Naive thymus-derived CD4-positive, alpha-beta T cell (primary cell): ENCODE measurements at regions of chr7 and their contacts with region 1.

Region 1: DNA sequence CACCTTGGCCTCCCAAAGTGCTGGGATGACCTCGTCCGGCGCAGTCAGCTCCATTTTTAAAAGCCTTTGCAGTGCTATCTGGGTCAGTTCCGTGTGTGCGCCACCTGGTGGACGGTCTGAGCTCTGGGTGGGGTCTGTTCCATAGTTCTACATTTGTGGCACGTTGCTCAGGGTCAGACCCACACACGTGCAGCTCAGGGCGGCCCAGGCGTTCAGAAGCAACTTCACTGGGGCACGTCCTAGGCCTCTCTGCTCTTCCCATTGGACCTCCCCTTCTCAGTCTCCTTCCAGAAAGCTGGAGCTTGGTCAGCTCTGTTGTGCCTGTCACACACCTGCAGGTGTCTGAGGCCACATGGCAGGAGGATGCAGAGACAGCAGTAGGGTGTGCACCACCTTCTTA is 137.9 kb downstream of the DNAJB6 start:
- DNase-seq: no peak
- ATAC-seq: no peak
- H3K4me3 ChIP-seq: no peak overlapping the region
- H3K4me3 Mint-ChIP-seq: peak overlapping the region in 5 of 10 donors; percentile 17 to 44 (median 36)
- H3K27ac ChIP-seq: no peak overlapping the region
- H3K27ac Mint-ChIP-seq: peak overlapping the region in 8 of 9 donors; percentile 3 to 97 (median 76)
- H3K4me1 ChIP-seq: peaks cover 21 to 44% of the 10 kb centered on the region in 2 donors
- H3K4me1 Mint-ChIP-seq: peaks cover 41 to 85% (median 63%) of the 10 kb centered on the region in 7 donors
- H3K27me3 ChIP-seq: no peaks in the 10 kb centered on the region
- H3K27me3 Mint-ChIP-seq: no peaks in the 10 kb centered on the region

Region 2: GRCh38 chr7:157485361-157485831 is 10.7 kb after region 1 on chr7:
- CTCF ChIA-PET with region 1: interaction called, 3 read pairs
- POLR2A ChIA-PET with region 1: interaction called, 20 read pairs
- intact Hi-C with region 1: loop called (anchors 1 kb)
- DNase-seq: no peak
- ATAC-seq: peak; percentile 30
- H3K4me3 ChIP-seq: no peak overlapping the region
- H3K4me3 Mint-ChIP-seq: peak overlapping the region in 1 of 10 donors; percentile 12
- H3K27ac ChIP-seq: no peak overlapping the region
- H3K27ac Mint-ChIP-seq: peak overlapping the region in 3 of 9 donors; percentile 15 to 59 (median 47)
- H3K4me1 ChIP-seq: peaks cover 13 to 19% of the 10 kb centered on the region in 2 donors
- H3K4me1 Mint-ChIP-seq: peaks cover 11 to 32% (median 18%) of the 10 kb centered on the region in 7 donors
- H3K27me3 ChIP-seq: no peaks in the 10 kb centered on the region
- H3K27me3 Mint-ChIP-seq: peaks cover 0 to 8% (median 0%) of the 10 kb centered on the region in 5 donors

Region 3: GRCh38 chr7:157490457-157490912 is 15.8 kb after region 1 on chr7:
- CTCF ChIA-PET with region 1: interaction called, 5 read pairs
- POLR2A ChIA-PET with region 1: interaction called, 20 read pairs
- intact Hi-C with region 1: loop called (anchors 1 kb)
- DNase-seq: peak in 8 of 9 donors; percentile 48 to 83 (median 79)
- ATAC-seq: peak; percentile 96
- H3K4me3 ChIP-seq: no peak overlapping the region
- H3K4me3 Mint-ChIP-seq: peak overlapping the region; percentile 23 to 76 (median 51)
- H3K27ac ChIP-seq: no peak overlapping the region
- H3K27ac Mint-ChIP-seq: peak overlapping the region; percentile 12 to 90 (median 63)
- H3K4me1 ChIP-seq: peaks cover 18 to 21% of the 10 kb centered on the region in 2 donors
- H3K4me1 Mint-ChIP-seq: peaks cover 20 to 55% (median 41%) of the 10 kb centered on the region in 7 donors
- H3K27me3 ChIP-seq: no peaks in the 10 kb centered on the region
- H3K27me3 Mint-ChIP-seq: peaks cover 0 to 33% (median 10%) of the 10 kb centered on the region in 5 donors

Region 4: DNA sequence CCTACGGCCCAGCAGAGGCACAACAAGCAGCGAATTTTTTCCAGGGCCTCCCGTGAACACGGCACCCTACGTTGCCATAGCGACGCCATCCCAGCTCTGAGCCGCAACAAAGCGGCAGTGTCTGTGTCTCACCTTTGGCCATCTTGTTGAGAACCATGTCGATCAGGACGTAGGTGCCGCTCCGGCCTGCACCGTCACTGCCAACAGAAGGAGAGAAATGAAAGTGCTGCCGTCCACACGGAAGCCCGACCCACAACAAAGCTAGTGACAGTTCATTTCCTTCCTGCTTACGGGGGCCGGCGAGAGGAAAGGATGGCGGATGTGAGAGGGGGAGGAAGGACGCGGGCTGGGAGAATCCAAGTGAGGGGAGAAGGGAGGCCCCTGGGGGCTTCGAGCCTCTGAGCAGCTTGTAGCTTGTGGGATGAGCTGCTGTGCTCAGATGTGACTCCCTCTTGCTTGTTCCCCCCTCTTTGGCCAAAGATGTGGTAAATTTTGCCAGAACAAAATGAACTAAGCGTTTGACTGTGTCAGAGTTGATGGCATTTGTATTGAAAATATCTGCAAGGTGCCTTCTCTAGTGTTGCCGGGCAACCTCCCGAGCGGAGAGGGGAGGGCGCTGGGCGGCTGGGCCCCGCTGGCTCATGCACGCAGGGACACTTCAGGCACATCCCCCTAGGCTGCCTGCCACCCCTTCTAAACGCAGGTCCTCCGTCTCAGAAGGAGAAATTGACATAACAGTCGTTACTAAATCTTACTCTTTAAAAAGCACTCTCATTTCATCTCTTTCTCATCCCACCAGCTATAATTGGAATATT is 94.3 kb after region 1 on chr7:
- CTCF ChIA-PET with region 1: interaction called, 3 read pairs
- POLR2A ChIA-PET with region 1: interaction called, 3 read pairs
- intact Hi-C with region 1: loop called in 1 of 2 experiments (anchors 2 kb)
- DNase-seq: peak; percentile 36 to 73 (median 64)
- ATAC-seq: peak; percentile 84
- H3K4me3 ChIP-seq: peak overlapping the region; percentile 54
- H3K4me3 Mint-ChIP-seq: peak overlapping the region; percentile 87 to 98 (median 92)
- H3K27ac ChIP-seq: no peak overlapping the region
- H3K27ac Mint-ChIP-seq: peak overlapping the region; percentile 63 to 95 (median 82)
- H3K4me1 ChIP-seq: peaks cover 11 to 15% of the 10 kb centered on the region in 2 donors
- H3K4me1 Mint-ChIP-seq: peaks cover 12 to 33% (median 24%) of the 10 kb centered on the region in 7 donors
- H3K27me3 ChIP-seq: no peaks in the 10 kb centered on the region
- H3K27me3 Mint-ChIP-seq: peaks cover 0 to 6% (median 0%) of the 10 kb centered on the region in 5 donors

Region 5: DNA sequence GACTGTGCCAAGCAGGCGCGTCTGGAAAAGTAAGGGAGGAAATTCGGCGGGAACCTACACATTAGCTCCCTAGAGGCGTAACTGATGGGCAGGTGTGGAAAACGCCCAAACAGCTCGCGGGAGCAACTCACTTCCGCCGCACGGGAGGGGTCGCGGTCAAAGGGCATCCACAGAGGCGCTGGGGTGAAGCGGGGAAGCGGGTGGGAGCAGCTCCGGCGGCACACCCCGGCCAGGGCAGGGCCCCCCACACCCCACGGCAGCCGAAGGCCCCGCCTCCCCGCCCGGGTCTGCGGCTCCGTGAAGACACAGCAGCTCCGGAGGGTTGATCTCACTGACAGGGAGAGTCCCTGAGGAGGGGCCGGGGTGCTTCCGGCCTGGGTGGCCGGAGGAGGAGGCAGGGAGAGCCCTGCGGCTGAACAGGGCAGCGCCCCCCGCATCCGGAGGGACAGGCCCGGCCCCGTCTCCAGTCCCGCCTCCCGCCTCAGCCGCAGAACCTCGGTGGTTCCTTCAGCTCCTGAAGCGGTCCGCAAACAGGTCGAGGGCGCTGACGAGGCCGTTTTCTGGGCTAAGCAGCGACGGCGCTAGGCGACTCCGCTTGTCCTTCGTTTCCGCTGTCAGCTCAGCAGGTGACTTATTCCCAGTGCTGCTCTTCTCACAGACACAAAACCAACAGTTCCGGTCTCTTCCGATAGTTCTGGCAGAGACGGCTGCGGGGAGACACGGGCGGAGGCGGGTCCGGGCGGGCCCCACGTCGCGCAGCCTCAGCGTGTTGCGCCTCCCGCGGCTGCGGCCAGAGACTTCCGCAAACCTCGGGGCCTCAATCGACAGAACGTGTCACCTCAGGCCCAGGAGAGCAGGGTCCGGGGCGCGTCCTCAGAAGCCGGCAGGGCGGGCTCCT is 138.2 kb after region 1 on chr7:
- CTCF ChIA-PET with region 1: interaction called, 3 read pairs
- POLR2A ChIA-PET with region 1: interaction called, 6 read pairs
- intact Hi-C with region 1: loop called in 1 of 2 experiments (anchors 5 kb)
- DNase-seq: peak; percentile 50 to 86 (median 79)
- ATAC-seq: peak; percentile 88
- H3K4me3 ChIP-seq: peak overlapping the region; percentile 79
- H3K4me3 Mint-ChIP-seq: peak overlapping the region; percentile 76 to 93 (median 86)
- H3K27ac ChIP-seq: peak overlapping the region; percentile 63
- H3K27ac Mint-ChIP-seq: peak overlapping the region; percentile 80 to 97 (median 88)
- H3K4me1 ChIP-seq: peaks cover 0 to 8% of the 10 kb centered on the region in 2 donors
- H3K4me1 Mint-ChIP-seq: peaks cover 8 to 37% (median 23%) of the 10 kb centered on the region in 7 donors
- H3K27me3 ChIP-seq: no peaks in the 10 kb centered on the region
- H3K27me3 Mint-ChIP-seq: peaks cover 0 to 4% (median 0%) of the 10 kb centered on the region in 5 donors

Region 6: GRCh38 chr7:157827045-157827862 is 352.6 kb after region 1 on chr7:
- CTCF ChIA-PET with region 1: no interaction called
- POLR2A ChIA-PET with region 1: no interaction called
- intact Hi-C with region 1: loop called in 1 of 2 experiments (anchors 5 kb)
- DNase-seq: peak in 7 of 9 donors; percentile 53 to 79 (median 67)
- ATAC-seq: peak; percentile 74
- H3K4me3 ChIP-seq: peak overlapping the region; percentile 37
- H3K4me3 Mint-ChIP-seq: peak overlapping the region; percentile 45 to 83 (median 78)
- H3K27ac ChIP-seq: peak overlapping the region; percentile 40
- H3K27ac Mint-ChIP-seq: peak overlapping the region; percentile 66 to 96 (median 89)
- H3K4me1 ChIP-seq: peaks cover 0 to 47% of the 10 kb centered on the region in 2 donors
- H3K4me1 Mint-ChIP-seq: peaks cover 9 to 58% (median 45%) of the 10 kb centered on the region in 7 donors
- H3K27me3 ChIP-seq: no peaks in the 10 kb centered on the region
- H3K27me3 Mint-ChIP-seq: no peaks in the 10 kb centered on the region